ENCODE measurements at regions of chr4 and their contacts with region 1.

Region 1: GRCh38 chr4:74133786-74134499 is 24.0 kb upstream of the MTHFD2L start:
- DNase-seq: peak; percentile 86
- H3K4me3 Mint-ChIP-seq: no peak overlapping the region
- H3K27ac Mint-ChIP-seq: no peak overlapping the region
- H3K4me1 Mint-ChIP-seq: no peaks in the 10 kb centered on the region
- H3K27me3 Mint-ChIP-seq: peaks cover 17% of the 10 kb centered on the region

Region 2: DNA sequence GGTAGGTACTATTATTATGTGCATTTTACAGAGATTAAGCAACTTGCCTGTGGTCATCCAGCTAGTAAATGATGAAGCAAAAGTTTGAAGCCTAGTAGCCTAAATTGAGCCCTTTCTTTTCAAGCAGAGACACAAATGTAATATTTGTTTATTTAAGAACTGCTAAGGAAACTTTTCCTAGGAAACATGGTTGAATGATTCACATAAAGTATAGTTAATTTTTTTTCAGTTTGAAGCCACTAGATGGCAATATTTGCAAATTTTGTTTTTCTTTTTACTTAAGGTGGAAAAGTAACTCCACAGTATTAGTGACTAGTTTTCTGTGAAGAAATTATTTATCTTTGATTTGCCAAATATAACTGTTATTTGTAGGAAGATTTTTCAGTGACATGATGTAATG is 822.5 kb before region 1 on chr4:
- intact Hi-C with region 1: loop called (anchors 2 kb)
- DNase-seq: no peak
- H3K4me3 Mint-ChIP-seq: no peak overlapping the region
- H3K27ac Mint-ChIP-seq: no peak overlapping the region
- H3K4me1 Mint-ChIP-seq: no peaks in the 10 kb centered on the region
- H3K27me3 Mint-ChIP-seq: peaks cover 1% of the 10 kb centered on the region

Region 3: DNA sequence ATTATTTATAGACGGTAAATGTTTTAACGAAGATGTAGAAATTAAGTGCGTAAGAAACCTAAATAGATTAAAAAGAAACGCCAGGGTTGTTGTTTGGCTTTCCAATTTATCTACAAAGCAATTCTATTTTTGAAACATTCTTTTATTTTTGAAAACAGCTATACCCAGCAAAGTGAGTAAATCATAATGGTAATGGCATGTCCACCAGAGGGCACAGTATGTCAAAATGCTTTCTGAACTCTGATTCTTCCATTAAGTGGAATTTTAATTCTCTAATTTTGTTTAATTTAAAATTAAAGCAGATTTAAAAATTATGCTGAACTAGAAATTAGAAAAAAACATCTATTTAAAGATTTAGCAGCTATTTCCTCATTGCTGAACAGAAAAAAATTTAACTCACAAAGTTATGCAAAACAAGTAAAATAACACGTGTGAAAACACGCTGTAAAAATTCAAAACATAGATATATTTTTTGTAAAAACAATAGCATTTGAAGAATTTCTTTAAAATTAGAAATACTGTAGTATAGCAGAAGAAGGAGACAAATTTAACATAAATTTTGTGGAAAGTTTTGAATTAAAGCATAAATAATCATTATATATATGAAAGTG is 540.2 kb before region 1 on chr4:
- intact Hi-C with region 1: loop called (anchors 2 kb)
- DNase-seq: no peak
- H3K4me3 Mint-ChIP-seq: no peak overlapping the region
- H3K27ac Mint-ChIP-seq: no peak overlapping the region
- H3K4me1 Mint-ChIP-seq: no peaks in the 10 kb centered on the region
- H3K27me3 Mint-ChIP-seq: peaks cover 2% of the 10 kb centered on the region

Region 4: GRCh38 chr4:73662709-73663546 is 471.0 kb before region 1 on chr4:
- intact Hi-C with region 1: loop called (anchors 2 kb)
- DNase-seq: no peak
- H3K4me3 Mint-ChIP-seq: no peak overlapping the region
- H3K27ac Mint-ChIP-seq: no peak overlapping the region
- H3K4me1 Mint-ChIP-seq: peaks cover 3% of the 10 kb centered on the region
- H3K27me3 Mint-ChIP-seq: peaks cover 3% of the 10 kb centered on the region

Region 5: DNA sequence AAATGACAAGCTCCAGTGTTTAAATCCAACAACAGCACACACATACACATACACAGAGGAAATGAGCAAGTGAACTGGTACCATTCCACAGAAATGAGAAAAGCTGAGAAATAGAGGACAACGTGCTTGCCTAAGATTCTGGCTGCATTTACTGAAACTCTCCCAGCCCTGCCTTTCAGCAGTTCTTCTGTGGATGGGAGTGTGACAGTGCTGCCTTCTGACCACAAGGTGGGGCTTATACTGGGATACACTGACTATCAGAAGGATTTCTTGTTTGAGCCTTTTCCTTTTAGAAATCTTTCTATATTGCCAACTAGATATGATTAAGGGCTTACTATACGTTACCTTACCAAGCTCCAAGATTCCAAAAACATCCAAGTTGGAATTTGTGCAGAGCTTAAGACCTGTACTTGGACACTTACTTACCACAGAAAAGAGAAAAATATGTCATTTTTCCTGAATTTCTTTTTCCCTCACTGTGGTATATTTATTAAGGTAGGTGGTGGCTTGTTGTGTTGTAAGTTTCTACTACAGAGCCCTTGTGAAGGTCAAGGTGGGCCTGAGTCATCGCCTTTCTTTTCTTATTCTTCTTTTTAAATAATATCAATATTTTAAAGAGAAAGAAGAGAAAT is 404.3 kb before region 1 on chr4:
- intact Hi-C with region 1: loop called (anchors 10 kb)
- DNase-seq: peak; percentile 64
- H3K4me3 Mint-ChIP-seq: no peak overlapping the region
- H3K27ac Mint-ChIP-seq: no peak overlapping the region
- H3K4me1 Mint-ChIP-seq: peaks cover 10% of the 10 kb centered on the region
- H3K27me3 Mint-ChIP-seq: no peaks in the 10 kb centered on the region

Region 6: DNA sequence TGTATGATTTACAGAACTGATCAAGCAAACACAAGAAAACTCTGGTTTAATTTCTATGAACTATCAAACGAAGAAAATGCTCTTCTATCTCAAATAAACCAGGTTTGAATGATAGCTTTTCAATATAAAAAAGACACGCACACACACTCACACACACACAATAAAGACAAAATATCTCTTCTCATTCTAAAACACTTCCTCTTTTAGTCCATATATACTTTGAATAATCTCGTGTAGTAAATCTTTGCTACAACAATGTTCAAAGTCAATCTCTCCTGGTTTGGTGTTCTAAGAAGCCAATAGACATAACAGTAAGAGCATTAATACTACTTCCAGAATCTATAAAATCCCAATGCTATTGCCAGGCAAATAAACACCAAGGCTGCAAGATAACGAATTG is 48.3 kb before region 1 on chr4:
- intact Hi-C with region 1: no loop called
- DNase-seq: no peak
- H3K4me3 Mint-ChIP-seq: no peak overlapping the region
- H3K27ac Mint-ChIP-seq: no peak overlapping the region
- H3K4me1 Mint-ChIP-seq: no peaks in the 10 kb centered on the region
- H3K27me3 Mint-ChIP-seq: no peaks in the 10 kb centered on the region